ENCODE measurements at regions of chr16 and their contacts with region 1.

Region 1: GRCh38 chr16:72664509-72665225 is 383.3 kb downstream of the ZFHX3 start:
- DNase-seq: peak; percentile 98
- H3K4me3 Mint-ChIP-seq: peak overlapping the region; percentile 100
- H3K27ac Mint-ChIP-seq: peak overlapping the region; percentile 95
- H3K4me1 Mint-ChIP-seq: peaks cover 9% of the 10 kb centered on the region
- H3K27me3 Mint-ChIP-seq: no peaks in the 10 kb centered on the region

Region 2: DNA sequence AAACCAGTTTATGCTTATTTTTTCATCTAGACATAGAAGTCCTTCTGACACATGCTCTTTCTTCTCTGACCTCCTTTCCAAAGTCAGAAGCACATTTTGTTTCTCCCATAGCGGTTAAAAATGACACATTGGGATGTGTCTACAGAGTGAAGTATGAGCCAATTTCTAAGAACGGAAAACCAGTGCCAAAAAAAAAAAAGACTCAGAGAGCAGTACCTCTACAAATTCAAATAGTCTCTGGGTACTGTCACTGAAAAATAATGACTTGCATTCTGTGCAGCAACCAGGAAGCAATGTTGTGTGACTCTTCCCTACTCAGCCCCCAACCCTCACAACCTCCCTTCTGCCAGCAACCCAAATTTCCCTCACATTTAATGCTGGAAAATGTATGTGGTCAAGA is 347.2 kb before region 1 on chr16:
- CTCF ChIA-PET with region 1: no interaction called
- intact Hi-C with region 1: no loop called
- DNase-seq: no peak
- H3K4me3 Mint-ChIP-seq: no peak overlapping the region
- H3K27ac Mint-ChIP-seq: no peak overlapping the region
- H3K4me1 Mint-ChIP-seq: no peaks in the 10 kb centered on the region
- H3K27me3 Mint-ChIP-seq: peaks cover 7% of the 10 kb centered on the region

Region 3: DNA sequence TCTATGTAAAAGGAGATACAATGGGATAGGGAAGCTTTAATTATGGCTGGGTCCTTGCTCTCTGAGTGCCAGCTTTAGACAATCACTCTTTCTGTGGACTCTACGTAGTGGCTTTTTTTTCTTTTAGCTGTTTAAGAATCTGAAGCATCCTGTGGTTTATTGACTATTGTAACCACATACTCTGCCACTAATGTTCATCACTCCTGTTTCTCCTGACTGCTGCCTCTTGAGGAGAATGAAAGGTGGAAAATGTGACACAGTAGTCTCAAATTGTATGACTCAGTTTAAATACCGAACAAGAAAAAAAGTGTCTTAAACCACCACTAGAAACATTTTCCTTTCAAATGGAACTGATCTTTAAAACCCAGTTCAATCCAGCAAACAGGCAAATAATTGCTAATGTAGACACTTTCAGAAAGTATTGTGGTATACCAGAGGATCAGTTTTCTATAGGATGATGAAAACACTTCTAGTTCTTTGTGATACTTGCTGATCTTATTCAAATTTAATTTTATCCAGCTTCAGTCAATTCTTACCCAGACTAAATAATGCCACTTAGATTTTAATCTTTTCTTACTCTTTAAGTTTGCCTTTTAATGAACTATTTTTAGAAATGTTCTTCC is 190.1 kb before region 1 on chr16:
- CTCF ChIA-PET with region 1: no interaction called
- intact Hi-C with region 1: loop called (anchors 1 kb)
- DNase-seq: peak; percentile 10
- H3K4me3 Mint-ChIP-seq: no peak overlapping the region
- H3K27ac Mint-ChIP-seq: no peak overlapping the region
- H3K4me1 Mint-ChIP-seq: peaks cover 14% of the 10 kb centered on the region
- H3K27me3 Mint-ChIP-seq: no peaks in the 10 kb centered on the region

Region 4: DNA sequence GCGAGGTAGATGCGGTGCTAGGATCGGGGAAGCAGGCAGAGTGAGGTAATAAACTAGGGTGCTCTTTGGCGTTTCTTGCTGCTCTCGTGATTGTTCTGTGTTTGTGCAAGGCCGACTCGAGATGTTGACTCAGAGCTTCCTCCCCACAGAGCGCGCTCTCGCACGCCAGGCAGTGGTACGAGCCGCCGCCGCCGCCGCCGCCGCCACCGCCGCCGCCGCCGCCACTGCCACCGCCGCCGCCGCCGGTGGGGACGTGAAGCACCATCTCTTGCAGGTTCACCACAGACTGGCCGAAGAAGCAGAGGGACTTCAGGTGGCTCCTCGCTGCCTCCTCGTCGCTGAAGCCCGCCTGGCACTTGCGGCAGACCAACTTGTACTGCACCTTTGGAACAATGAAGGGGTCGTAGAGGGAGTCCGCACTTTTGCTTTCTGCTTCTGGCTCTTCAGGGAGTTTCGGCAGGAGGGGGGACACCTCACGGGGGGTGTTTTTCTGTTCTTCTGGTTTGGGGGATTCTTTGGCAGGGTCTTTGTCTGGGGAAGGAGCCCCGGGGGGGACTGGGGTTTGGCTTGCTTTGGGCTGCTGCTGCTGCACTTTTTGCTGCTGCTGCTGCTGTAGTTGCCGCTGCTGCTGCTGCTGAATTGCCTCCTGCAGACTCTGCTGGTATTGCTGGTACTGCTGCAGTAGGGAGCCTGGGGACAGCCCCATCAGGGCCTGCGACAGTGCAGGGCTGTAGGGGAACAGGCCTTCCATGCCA is 123.0 kb after region 1 on chr16:
- CTCF ChIA-PET with region 1: no interaction called
- intact Hi-C with region 1: loop called (anchors 1 kb)
- DNase-seq: peak; percentile 82
- H3K4me3 Mint-ChIP-seq: peak overlapping the region; percentile 72
- H3K27ac Mint-ChIP-seq: peak overlapping the region; percentile 21
- H3K4me1 Mint-ChIP-seq: peaks cover 14% of the 10 kb centered on the region
- H3K27me3 Mint-ChIP-seq: peaks cover 28% of the 10 kb centered on the region

Region 5: DNA sequence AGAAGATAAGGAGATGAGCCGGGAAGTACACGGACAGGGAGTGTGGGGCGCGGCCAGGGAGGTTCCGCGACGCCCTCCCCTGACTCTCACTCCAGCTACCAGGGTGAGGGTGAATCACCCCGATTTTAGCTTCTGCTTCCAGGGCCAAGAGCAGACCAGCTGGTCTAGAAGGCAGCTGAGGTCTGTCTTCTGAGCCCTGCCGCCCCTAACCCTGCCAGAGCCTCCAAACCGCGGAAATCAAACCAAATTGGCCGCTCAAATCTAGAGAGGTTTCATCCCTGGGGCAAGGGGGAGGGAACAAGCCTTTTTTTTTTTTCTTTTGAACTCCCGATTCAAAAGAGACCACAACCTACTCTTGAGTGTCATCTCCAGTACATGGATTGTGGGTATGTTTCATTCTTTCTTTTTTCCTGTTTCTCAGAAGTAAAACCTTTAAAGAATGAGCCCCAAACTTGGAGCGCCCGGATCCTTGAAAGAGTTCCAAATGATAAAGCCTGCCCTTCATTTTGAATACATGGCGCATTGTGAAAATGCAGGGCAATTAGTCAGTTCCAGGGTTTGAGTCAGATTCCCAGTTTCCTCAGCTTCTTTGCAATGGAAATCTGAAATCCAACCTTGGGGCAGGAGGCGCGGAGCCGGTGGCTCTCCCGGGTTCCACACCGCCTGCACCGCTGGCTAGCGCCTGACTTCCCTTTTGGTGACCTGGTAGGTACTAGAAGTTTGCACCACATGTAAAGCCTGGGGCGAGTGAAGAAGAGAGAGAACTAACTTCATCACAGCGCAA is 399.7 kb after region 1 on chr16:
- CTCF ChIA-PET with region 1: no interaction called
- intact Hi-C with region 1: loop called (anchors 5 kb)
- DNase-seq: no peak
- H3K4me3 Mint-ChIP-seq: no peak overlapping the region
- H3K27ac Mint-ChIP-seq: no peak overlapping the region
- H3K4me1 Mint-ChIP-seq: peaks cover 18% of the 10 kb centered on the region
- H3K27me3 Mint-ChIP-seq: peaks cover 72% of the 10 kb centered on the region

Measured in activated naive CD4-positive, alpha-beta T cell treated with anti-CD3 and anti-CD28 coated beads for 36 hours (primary cell).